Psoas muscle (tissue), 8 donors: ENCODE measurements at regions of chr17 and their contacts with region 1.

Region 1: DNA sequence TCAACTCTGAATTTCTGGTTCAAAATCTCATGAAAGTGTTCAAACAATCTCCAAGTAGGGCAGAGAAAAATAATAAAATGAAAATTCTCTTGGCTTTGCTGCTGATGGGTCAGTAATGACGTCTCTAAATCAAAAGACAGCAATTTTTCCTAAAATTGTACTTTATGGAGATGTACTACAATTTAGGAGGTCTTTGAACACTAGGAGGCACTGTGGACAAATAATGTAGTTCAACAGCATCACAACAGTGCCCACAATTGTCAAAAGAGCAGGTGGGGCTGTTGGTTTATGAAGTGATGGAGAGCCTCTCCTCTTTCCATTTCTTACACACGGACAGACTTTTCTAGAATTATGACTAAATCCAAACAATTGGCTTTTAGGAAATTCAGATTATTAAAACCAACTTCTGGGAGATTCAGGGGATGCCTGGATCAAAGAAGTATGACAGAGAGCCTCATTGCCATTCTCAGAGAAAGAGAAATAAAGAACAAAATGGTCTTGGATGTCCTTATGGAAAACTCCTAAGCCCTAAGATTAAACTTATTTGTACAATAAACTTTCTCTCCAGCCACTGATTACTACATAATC is 23.8 kb downstream of the EZH1 start:
- DNase-seq: no peak
- ATAC-seq: peak; percentile 43 to 80 (median 65)
- H3K4me3 ChIP-seq: no peak overlapping the region
- H3K27ac ChIP-seq: no peak overlapping the region
- H3K4me1 ChIP-seq: no peaks in the 10 kb centered on the region
- H3K27me3 ChIP-seq: no peaks in the 10 kb centered on the region
- CTCF ChIP-seq: peak; percentile 59

Region 2: GRCh38 chr17:42472709-42473521 is 248.2 kb before region 1 on chr17:
- intact Hi-C with region 1: loop called (anchors 10 kb)
- DNase-seq: no peak
- ATAC-seq: peak in 2 of 4 donors; percentile 35 to 50
- H3K4me3 ChIP-seq: no peak overlapping the region
- H3K27ac ChIP-seq: no peak overlapping the region
- H3K4me1 ChIP-seq: no peaks in the 10 kb centered on the region
- H3K27me3 ChIP-seq: no peaks in the 10 kb centered on the region
- CTCF ChIP-seq: no peak

Region 3: GRCh38 chr17:42760652-42761581 is 39.8 kb after region 1 on chr17 and contains the start of gene RAMP2:
- intact Hi-C with region 1: loop called (anchors 2 to 5 kb)
- DNase-seq: peak; percentile 52 to 67
- ATAC-seq: peak; percentile 25 to 50 (median 40)
- H3K4me3 ChIP-seq: peak within 1 kb of the TSS; percentile 68
- H3K27ac ChIP-seq: peak within 1 kb of the TSS; percentile 63
- H3K4me1 ChIP-seq: peaks cover 4% of the 10 kb centered on the region
- H3K27me3 ChIP-seq: peaks cover 0 to 38% (median 14%) of the 10 kb centered on the region in 3 donors
- CTCF ChIP-seq: no peak
- total RNA-seq, gene RAMP2: 9.2 to 39.8 (median 18.7) TPM

Region 4: DNA sequence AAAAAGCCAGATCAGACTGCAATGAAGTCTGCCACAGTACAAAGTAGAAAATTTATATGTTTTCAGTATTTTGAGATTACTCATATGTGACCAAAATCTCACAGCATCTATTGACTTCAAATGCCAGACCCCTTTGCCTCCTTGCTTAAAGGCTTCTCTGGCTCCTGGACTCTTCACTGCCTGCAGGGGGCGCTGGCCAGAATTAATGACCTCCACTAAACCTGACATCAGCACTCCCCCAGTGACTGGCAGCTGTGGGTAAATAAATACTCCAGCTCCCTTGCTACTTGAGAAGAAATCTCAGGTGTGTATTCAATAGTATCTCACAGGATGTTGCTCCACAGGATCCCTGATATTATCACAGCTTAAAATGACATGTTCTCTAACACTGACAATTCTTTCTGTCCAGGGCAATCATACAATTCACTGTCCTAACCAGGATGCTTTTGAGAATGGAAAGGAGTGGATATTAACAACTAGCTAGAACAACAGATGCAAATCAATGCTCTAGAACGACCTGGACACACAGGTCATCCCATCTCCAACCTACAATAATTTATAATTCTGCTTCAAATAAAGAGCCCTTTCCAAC is 99.0 kb after region 1 on chr17:
- intact Hi-C with region 1: loop called (anchors 1 to 5 kb)
- DNase-seq: peak; percentile 66 to 80
- ATAC-seq: no peak
- H3K4me3 ChIP-seq: no peak overlapping the region
- H3K27ac ChIP-seq: no peak overlapping the region
- H3K4me1 ChIP-seq: peaks cover 12% of the 10 kb centered on the region
- H3K27me3 ChIP-seq: no peaks in the 10 kb centered on the region
- CTCF ChIP-seq: peak; percentile 54

Region 5: GRCh38 chr17:42937712-42938596 is 216.9 kb after region 1 on chr17:
- intact Hi-C with region 1: loop called in 1 of 2 experiments (anchors 10 kb)
- DNase-seq: peak in 1 of 2 donors; percentile 17
- ATAC-seq: peak; percentile 57 to 77 (median 68)
- H3K4me3 ChIP-seq: no peak overlapping the region
- H3K27ac ChIP-seq: no peak overlapping the region
- H3K4me1 ChIP-seq: no peaks in the 10 kb centered on the region
- H3K27me3 ChIP-seq: no peaks in the 10 kb centered on the region
- CTCF ChIP-seq: peak; percentile 65